ENCODE measurements at regions of chr6 and their contacts with region 1.

Region 1: GRCh38 chr6:31079656-31080261 is 32.6 kb downstream of the C6orf15 start:
- H3K4me3 ChIP-seq: 0 out of 2 replicates have a peak overlapping the region, but pooled peaks have one; percentile 16
- H3K27ac ChIP-seq: no peak overlapping the region
- H3K4me1 ChIP-seq: 0 out of 2 replicates have a peak, but pooled peaks cover 6% of the 10 kb centered on the region
- CTCF ChIP-seq: peak; percentile 49; the same call in 1 of the 2 replicates

Region 2: DNA sequence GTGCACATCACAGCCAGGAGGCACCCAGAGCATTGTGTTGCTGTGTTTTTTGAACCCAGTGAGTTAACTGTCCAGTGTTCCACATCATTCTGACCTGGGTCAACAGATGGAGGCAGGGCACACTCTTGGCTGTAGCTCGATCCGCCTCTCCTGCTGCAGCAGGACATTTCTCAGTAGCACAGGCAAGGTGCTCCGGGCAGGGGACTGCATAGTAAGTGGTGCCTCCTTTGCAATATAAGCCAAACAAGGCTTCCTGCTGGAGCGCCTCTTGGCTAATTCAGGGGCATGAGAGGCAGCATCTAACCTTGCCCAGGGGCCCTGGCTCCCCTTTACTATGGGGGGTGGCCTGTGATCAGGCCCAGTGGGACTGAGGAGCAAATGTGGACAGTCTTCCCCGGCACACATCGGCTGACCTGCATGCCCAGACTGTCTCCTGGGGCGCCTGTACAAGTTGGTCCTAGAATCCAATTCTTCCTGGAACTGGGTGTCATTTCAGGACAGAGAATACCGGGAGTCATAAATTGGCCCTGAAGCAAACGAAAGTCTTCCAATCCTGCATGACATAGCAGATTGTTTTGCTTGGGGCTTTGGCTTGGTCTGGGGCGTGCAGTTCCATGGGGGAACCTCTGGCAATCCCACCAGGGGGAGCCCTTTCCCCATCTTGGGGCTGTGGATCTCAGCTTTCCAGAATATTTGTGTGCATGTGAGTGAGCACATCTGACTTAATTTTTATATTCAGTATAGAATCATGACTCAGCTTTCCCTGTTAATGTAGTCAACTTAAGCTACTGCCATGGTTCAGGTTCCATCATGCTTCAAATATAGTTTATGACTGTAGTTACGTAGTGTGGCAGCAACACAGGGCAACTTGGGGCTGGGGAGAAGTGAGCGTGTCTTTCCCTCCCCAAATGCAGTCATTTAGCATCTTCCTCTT is 251.5 kb before region 1 on chr6:
- CTCF ChIA-PET with region 1: interaction called, 111 read pairs
- POLR2A ChIA-PET with region 1: no interaction called
- H3K4me3 ChIP-seq: no peak overlapping the region
- H3K27ac ChIP-seq: no peak overlapping the region
- H3K4me1 ChIP-seq: no peaks in the 10 kb centered on the region
- CTCF ChIP-seq: peak; percentile 79

Region 3: DNA sequence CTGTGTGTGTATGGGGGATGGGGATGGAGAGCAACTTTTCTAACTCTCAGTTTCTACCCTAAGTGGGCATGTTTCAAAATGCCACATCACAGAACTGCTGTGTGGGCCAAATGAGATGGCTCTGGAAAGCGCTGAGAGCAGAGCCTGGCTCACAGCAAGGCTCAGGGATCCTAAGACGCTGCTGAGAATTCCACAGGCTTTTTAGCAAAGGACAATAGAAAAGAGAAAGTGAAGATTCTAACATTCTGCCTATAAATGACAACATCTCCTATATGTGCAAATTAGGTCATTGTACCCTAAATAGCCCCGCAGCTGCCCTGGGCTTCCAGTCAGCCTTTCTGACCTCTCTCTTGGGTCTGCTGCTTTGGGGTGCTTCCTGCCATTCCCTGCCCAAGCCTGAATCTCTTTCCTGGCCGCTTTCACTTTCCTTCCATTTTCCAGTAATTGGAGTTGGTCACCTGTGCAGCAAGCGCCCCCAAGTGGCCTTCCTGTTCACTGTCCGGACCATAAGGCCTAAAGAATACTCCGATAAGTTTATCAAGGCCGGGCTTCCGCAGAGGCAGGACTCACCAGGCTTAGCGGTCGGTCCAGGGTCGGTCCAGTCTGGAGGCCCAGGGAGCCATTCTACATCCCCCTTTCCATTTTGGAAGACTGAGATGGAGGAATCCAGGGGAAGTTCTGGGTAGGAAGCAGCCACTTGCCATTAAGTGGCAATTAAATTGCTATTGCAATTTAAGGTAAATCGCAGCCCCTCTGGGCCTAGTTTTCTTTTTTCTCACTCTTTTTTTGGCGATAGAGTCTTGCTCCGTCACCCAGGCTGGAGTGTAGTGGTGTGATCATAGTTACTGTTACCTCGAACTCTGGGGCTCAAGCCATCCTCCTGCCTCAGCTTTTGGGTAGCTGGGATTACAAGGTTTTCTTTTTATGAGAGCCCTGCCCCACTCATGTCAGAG is 202.1 kb before region 1 on chr6:
- CTCF ChIA-PET with region 1: interaction called, 10 read pairs
- POLR2A ChIA-PET with region 1: no interaction called
- H3K4me3 ChIP-seq: peak overlapping the region; percentile 20
- H3K27ac ChIP-seq: no peak overlapping the region; the same call in 1 of the 2 replicates
- H3K4me1 ChIP-seq: no peaks in the 10 kb centered on the region; the same call in 1 of the 2 replicates
- CTCF ChIP-seq: peak; percentile 89

Region 4: GRCh38 chr6:30914076-30914853 is 165.5 kb before region 1 on chr6 and contains the start of gene VARS2:
- CTCF ChIA-PET with region 1: interaction called, 206 read pairs
- POLR2A ChIA-PET with region 1: interaction called, 15 read pairs
- H3K4me3 ChIP-seq: peak within 1 kb of the TSS; percentile 45
- H3K27ac ChIP-seq: peak within 1 kb of the TSS; percentile 85
- H3K4me1 ChIP-seq: peaks cover 6% of the 10 kb centered on the region
- CTCF ChIP-seq: peak; percentile 70

Region 5: DNA sequence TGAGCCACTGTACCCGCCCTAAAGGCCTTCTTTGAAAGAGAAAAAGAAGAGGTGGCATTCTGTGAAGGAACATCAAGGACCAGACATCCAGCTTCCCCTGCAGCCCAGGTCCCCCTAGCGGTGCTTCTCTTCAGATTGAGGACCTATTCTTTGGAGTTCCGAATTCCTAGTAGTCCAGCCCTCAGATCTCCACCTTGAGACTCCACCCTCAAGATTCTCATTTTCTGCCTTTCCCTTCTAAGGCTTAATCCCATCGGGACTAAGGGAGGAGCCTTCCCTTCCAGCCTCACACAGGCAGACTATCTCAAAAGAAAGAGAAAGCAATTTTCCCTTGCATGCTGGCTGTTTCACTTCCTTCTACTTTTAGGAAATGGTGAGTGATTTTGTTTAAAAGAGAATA is 37.0 kb before region 1 on chr6:
- CTCF ChIA-PET with region 1: interaction called, 12 read pairs
- POLR2A ChIA-PET with region 1: no interaction called
- H3K4me3 ChIP-seq: no peak overlapping the region
- H3K27ac ChIP-seq: no peak overlapping the region
- H3K4me1 ChIP-seq: no peaks in the 10 kb centered on the region
- CTCF ChIP-seq: no peak

Region 6: DNA sequence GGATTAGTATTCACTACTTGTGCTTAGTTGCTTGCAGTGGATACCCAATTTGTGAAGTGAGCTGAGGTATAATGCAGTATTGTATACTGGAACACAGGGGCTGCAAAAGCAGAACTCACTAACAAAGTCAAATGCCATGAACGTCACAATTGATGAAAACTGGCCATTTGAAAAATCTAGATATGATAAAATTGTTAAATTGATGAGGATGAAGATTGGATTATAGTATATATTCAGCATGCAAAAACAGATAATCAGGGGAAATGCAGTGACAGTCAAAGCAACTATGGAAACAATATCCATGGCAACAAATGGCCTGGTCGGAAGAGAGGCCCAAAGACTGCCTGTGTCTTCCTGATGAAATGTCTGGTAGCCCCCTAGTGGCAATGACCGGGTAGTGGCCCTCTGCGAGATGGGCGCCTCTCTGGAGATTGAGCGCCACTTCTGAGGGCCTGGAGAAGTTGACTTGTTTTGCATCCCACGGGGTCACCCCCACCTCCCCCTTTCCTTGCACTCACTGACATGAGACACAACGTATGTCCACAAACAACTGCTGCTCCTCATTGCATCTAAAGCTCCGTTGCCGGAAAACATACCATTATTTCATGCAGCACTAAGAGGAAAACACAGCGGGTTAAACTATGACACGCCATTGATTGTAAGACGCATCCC is 11.0 kb before region 1 on chr6:
- CTCF ChIA-PET with region 1: interaction called, 102 read pairs
- POLR2A ChIA-PET with region 1: interaction called, 3 read pairs
- H3K4me3 ChIP-seq: no peak overlapping the region
- H3K27ac ChIP-seq: no peak overlapping the region
- H3K4me1 ChIP-seq: peaks cover 17% of the 10 kb centered on the region
- CTCF ChIP-seq: peak; percentile 75

Region 7: GRCh38 chr6:31114970-31115849 is 35.5 kb after region 1 on chr6:
- CTCF ChIA-PET with region 1: interaction called, 14 read pairs
- POLR2A ChIA-PET with region 1: interaction called, 5 read pairs
- H3K4me3 ChIP-seq: no peak overlapping the region
- H3K27ac ChIP-seq: no peak overlapping the region
- H3K4me1 ChIP-seq: peaks cover 7% of the 10 kb centered on the region
- CTCF ChIP-seq: peak; percentile 42; the same call in 1 of the 2 replicates